Right ventricle myocardium inferior (tissue), 1 donor: ENCODE measurements at regions of chr12 and their contacts with region 1.

Region 1: GRCh38 chr12:69359531-69360347 is at the start of gene YEATS4:
- DNase-seq: peak; percentile 93
- ATAC-seq: peak; percentile 98
- total RNA-seq, gene YEATS4: 11.4 TPM

Region 2: GRCh38 chr12:69157023-69157655 is 202.6 kb before region 1 on chr12:
- intact Hi-C with region 1: loop called (anchors 10 kb)
- DNase-seq: peak; percentile 92
- ATAC-seq: peak; percentile 87

Region 3: GRCh38 chr12:69570545-69571399 is 211.0 kb after region 1 on chr12:
- intact Hi-C with region 1: loop called (anchors 5 kb)
- DNase-seq: no peak
- ATAC-seq: peak; percentile 68

Region 4: DNA sequence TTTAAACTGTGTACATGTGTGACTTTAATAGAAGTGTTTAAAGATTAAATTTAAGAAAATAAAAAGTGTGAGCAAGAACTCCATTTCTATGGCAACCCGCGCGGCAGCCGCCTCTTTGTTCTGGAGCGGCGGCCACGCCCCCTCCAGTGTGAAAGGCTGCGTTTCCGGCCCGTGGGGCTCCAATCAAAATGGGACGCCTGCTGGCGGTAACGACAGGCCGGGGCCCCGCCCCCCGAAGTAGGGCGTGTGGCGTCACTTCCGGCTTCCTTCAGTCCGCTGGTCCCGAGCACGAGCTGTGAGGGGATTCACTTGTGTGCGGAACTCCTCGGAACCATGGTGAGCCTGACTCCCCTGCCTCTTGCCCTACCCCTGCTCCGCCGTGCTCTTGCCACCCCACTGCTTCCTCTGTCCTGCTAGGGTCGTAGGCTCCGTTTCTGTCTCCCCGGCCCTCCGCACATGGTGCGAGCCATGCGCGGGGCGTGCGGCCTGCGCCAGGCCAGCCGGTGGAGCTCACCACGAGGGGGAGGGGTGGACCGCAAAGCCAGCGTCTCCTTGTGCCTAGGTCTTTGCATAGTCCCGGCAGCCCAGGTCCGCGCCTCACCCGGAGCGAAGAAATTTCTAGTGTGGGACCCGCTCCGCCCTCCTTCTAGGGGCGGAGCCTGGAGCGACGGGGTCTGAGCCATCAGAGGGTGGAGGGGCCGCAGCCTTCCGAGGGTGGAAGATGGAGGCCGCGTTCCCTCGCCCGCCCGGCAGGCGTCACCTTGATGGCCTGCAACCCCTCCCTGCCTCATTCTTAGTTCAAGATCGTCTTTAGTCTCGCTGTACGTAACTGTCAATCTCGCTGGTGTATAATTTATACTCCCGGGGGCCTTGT is 225.7 kb after region 1 on chr12 and contains the start of gene CCT2:
- intact Hi-C with region 1: loop called (anchors 1 kb)
- DNase-seq: peak; percentile 99
- ATAC-seq: peak; percentile 100
- total RNA-seq, gene CCT2: 100 TPM

Region 5: GRCh38 chr12:69639400-69640016 is 279.8 kb after region 1 on chr12:
- intact Hi-C with region 1: loop called (anchors 5 kb)
- DNase-seq: peak; percentile 72
- ATAC-seq: peak; percentile 44